Adrenal gland (tissue), 19 donors: ENCODE measurements at regions of chr22 and their contacts with region 1.

Region 1: GRCh38 chr22:49310354-49310753 is 517.3 kb downstream of the BRD1 start:
- DNase-seq: peak in 2 of 7 donors; percentile 2 to 5
- H3K4me3 ChIP-seq: no peak overlapping the region
- H3K27ac ChIP-seq: no peak overlapping the region
- H3K4me1 ChIP-seq: no peaks in the 10 kb centered on the region
- H3K27me3 ChIP-seq: peaks cover 12% of the 10 kb centered on the region
- CTCF ChIP-seq: no peak
- POLR2A ChIP-seq: no peak

Region 2: DNA sequence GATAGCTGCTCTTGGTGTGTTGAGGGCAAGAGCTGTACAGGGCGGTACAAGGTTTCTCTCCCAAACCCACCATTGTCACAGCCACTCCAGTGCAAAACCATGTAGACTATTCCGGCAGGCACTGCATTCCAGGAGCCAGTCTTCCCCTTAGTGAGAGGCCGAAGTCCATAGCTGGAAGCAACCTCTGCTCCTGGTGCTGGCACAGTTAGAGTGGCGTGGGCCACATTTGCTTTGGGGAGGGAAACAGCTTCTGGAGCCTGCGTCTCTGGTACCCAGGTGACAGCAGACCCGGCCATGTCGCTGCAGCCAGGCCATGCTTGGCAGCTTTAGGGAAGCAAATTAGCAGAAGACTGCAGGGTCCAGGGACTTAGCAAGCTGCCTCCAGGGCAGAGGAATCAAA is 270.7 kb before region 1 on chr22:
- intact Hi-C with region 1: loop called in 1 of 2 experiments (anchors 5 kb)
- DNase-seq: peak in 1 of 7 donors; percentile 1
- H3K4me3 ChIP-seq: no peak overlapping the region
- H3K27ac ChIP-seq: no peak overlapping the region
- H3K4me1 ChIP-seq: no peaks in the 10 kb centered on the region
- H3K27me3 ChIP-seq: no peaks in the 10 kb centered on the region
- CTCF ChIP-seq: no peak
- POLR2A ChIP-seq: no peak

Region 3: DNA sequence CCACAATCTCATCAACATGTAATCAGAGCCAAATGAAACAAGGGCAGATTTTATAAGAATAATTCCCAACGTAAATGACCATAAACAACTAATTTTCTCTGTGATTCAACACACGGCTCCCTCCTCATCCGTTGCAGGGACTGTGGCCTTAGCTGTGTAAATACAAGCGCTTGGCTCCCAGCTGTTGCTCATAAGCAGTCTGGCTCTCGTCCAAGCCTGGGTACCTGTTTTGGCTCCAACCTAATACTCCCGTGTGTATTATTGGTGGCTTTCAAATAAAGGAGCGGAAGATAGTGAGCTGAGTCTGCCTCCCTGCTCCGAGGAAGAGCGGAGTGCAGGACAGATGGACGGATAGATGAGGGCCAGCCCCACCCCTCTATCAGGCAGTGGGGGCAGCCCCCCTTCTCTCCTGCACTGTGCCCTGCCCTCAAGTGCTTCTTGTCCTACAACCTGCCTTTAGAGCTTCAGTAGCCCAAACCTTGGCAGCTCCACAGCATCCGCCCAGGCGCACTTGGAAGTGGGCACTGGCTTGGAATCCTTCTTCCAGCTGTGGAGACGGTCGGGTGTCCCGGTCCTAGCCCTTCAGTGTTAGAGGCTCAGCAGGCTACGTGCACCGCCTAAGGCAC is 153.6 kb before region 1 on chr22:
- intact Hi-C with region 1: no loop called
- DNase-seq: no peak
- H3K4me3 ChIP-seq: no peak overlapping the region
- H3K27ac ChIP-seq: no peak overlapping the region
- H3K4me1 ChIP-seq: no peaks in the 10 kb centered on the region
- H3K27me3 ChIP-seq: no peaks in the 10 kb centered on the region
- CTCF ChIP-seq: no peak
- POLR2A ChIP-seq: no peak

Region 4: DNA sequence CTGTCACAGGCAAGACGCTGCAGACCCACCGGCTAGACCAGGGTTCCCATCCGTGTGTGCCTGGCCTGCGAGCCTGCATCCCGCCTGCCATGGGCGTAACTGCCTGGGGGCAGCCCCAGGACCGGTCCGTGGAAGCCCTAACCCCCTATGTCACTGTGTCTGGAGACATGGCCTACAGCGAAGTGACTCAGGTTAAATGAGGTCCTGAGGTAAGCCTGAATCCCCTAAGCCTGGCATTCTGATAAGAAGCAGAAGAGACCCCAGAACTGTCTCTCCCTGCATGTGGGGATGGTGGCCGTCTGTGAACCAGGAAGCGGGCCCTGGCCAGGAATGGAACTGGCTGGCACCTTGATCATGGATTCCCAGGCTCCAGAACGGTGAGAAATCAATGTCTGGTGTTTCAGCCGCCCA is 52.8 kb before region 1 on chr22:
- intact Hi-C with region 1: no loop called
- DNase-seq: peak in 1 of 7 donors; percentile 24
- H3K4me3 ChIP-seq: no peak overlapping the region
- H3K27ac ChIP-seq: no peak overlapping the region
- H3K4me1 ChIP-seq: no peaks in the 10 kb centered on the region
- H3K27me3 ChIP-seq: peaks cover 7% of the 10 kb centered on the region
- CTCF ChIP-seq: no peak
- POLR2A ChIP-seq: no peak

Region 5: DNA sequence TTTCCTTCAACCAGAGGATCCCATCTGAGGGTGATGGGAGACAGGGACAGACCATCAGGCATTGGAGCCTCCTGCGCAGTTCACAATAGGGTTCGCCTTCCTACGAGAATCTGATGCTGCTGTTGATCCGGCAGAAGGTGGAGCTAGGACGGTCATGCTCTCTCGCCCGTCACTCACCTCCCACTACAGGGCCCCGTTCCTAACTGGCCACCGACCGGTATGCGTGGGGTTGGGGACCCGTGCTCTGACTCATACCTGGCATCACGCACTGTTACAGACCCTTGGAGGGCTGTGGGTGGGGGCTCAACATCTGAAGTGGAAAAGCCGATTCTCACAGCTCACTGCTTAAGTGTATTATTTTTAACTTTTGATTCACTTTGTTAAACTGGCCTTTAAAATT is 115.0 kb after region 1 on chr22:
- intact Hi-C with region 1: no loop called
- DNase-seq: peak in 1 of 7 donors; percentile 7
- H3K4me3 ChIP-seq: no peak overlapping the region
- H3K27ac ChIP-seq: no peak overlapping the region
- H3K4me1 ChIP-seq: no peaks in the 10 kb centered on the region
- H3K27me3 ChIP-seq: no peaks in the 10 kb centered on the region
- CTCF ChIP-seq: no peak
- POLR2A ChIP-seq: no peak